ENCODE measurements at regions of chr2 and their contacts with region 1.

Region 1: GRCh38 chr2:102366406-102367112 is 11.0 kb downstream of the IL18R1 start:
- DNase-seq: peak; percentile 35
- ATAC-seq: peak; percentile 54
- H3K4me3 Mint-ChIP-seq: peak overlapping the region; percentile 55
- H3K27ac Mint-ChIP-seq: peak overlapping the region; percentile 93
- H3K4me1 Mint-ChIP-seq: peaks cover 73% of the 10 kb centered on the region
- H3K27me3 Mint-ChIP-seq: no peaks in the 10 kb centered on the region

Region 2: DNA sequence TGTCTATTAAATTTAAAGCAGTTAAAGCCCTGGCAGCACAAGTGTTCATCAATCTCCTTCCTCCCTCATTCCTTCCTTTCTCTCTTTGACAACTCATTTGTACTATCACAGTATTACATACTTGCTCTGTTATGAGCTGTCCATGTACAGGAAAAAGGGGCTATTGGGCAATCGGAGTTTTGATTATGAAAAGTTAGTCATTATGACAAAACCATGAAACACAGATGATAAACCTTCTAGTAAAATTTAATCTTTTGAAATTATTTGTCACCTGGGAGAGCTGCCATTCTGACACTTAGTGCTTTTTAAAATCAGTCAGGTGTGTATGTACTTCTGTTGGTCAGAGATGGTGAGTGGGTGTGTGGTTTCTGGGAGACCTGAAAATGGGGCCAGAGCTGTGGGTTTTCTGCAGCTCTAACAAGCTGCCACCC is 629.7 kb before region 1 on chr2:
- CTCF ChIA-PET with region 1: no interaction called
- POLR2A ChIA-PET with region 1: no interaction called
- intact Hi-C with region 1: loop called in 1 of 2 experiments (anchors 10 kb)
- DNase-seq: peak; percentile 77
- ATAC-seq: peak; percentile 86
- H3K4me3 Mint-ChIP-seq: no peak overlapping the region
- H3K27ac Mint-ChIP-seq: peak overlapping the region; percentile 51
- H3K4me1 Mint-ChIP-seq: peaks cover 84% of the 10 kb centered on the region
- H3K27me3 Mint-ChIP-seq: no peaks in the 10 kb centered on the region

Region 3: DNA sequence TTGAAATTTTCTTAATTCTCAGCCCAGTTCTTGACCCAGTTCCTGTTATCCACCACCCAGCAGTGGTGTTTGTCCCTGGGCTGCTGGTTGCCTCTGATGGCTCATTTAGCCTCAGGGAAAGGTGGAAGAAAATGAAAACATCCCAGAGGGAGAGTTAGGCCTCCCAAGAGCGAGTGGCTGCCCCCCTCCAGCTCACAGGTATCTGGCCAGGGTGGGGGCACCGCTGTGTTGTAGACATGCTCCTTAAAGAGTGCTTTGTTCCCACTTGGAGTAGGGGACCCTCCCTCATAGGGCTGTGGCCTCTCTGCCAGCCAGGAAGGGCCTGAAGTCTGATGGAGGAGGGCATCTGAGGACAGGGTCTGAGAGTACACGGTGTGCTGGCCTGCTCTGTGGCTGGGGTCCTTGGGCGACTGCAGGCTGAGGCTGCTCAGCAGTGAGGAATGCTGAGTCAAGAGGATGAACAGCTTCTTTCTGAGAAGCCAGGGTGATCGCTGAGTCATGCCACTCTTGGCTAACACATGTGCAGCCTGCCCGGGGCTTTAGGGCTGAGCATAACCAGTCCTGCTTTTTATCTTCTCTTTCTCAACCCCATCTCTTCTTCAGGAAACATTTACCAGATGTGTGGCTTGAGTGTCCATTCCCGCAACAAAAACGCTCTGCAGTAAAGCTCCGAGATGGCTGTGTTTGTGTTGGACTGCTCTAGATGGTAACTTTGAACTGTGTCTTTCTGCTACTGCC is 302.4 kb before region 1 on chr2:
- CTCF ChIA-PET with region 1: no interaction called
- POLR2A ChIA-PET with region 1: no interaction called
- intact Hi-C with region 1: loop called in 1 of 2 experiments (anchors 1 kb)
- DNase-seq: peak; percentile 77
- ATAC-seq: peak; percentile 35
- H3K4me3 Mint-ChIP-seq: no peak overlapping the region
- H3K27ac Mint-ChIP-seq: peak overlapping the region; percentile 86
- H3K4me1 Mint-ChIP-seq: peaks cover 38% of the 10 kb centered on the region
- H3K27me3 Mint-ChIP-seq: no peaks in the 10 kb centered on the region

Region 4: DNA sequence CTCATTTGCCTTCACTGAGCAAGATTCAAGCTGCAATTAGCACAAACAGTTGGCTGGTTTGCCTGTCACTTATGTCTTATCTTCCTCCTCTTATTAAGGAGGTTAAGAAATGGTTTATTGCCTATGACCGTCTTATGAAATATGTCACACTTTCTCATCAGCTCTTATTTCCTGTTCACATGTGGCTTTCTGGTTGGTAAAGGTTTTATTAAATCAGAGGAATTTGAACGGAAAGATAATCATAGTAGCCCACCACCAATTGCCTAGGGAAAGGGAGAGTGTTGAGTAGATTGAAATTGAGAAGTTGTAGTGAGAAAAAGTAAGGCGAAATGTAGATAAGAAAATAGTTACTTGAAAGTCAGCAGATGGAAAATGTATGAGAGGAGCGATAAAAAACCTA is 228.2 kb before region 1 on chr2:
- CTCF ChIA-PET with region 1: no interaction called
- POLR2A ChIA-PET with region 1: no interaction called
- intact Hi-C with region 1: loop called (anchors 2 kb)
- DNase-seq: no peak
- ATAC-seq: peak; percentile 7
- H3K4me3 Mint-ChIP-seq: peak overlapping the region; percentile 7
- H3K27ac Mint-ChIP-seq: peak overlapping the region; percentile 89
- H3K4me1 Mint-ChIP-seq: peaks cover 64% of the 10 kb centered on the region
- H3K27me3 Mint-ChIP-seq: peaks cover 23% of the 10 kb centered on the region

Region 5: GRCh38 chr2:102206666-102207341 is 159.8 kb before region 1 on chr2:
- CTCF ChIA-PET with region 1: no interaction called
- POLR2A ChIA-PET with region 1: no interaction called
- intact Hi-C with region 1: no loop called
- DNase-seq: no peak
- ATAC-seq: no peak
- H3K4me3 Mint-ChIP-seq: no peak overlapping the region
- H3K27ac Mint-ChIP-seq: no peak overlapping the region
- H3K4me1 Mint-ChIP-seq: no peaks in the 10 kb centered on the region
- H3K27me3 Mint-ChIP-seq: no peaks in the 10 kb centered on the region

Region 6: GRCh38 chr2:102355526-102356380 is 10.8 kb before region 1 on chr2 and contains the start of gene IL18R1:
- CTCF ChIA-PET with region 1: interaction called, 10 read pairs
- POLR2A ChIA-PET with region 1: interaction called, 3 read pairs
- intact Hi-C with region 1: loop called (anchors 1 kb)
- DNase-seq: peak; percentile 85
- ATAC-seq: peak; percentile 86
- H3K4me3 Mint-ChIP-seq: peak within 1 kb of the TSS; percentile 100
- H3K27ac Mint-ChIP-seq: peak within 1 kb of the TSS; percentile 99
- H3K4me1 Mint-ChIP-seq: peaks cover 36% of the 10 kb centered on the region
- H3K27me3 Mint-ChIP-seq: no peaks in the 10 kb centered on the region
- total RNA-seq, gene IL18R1: 22.4 to 23.4 TPM

Region 7: DNA sequence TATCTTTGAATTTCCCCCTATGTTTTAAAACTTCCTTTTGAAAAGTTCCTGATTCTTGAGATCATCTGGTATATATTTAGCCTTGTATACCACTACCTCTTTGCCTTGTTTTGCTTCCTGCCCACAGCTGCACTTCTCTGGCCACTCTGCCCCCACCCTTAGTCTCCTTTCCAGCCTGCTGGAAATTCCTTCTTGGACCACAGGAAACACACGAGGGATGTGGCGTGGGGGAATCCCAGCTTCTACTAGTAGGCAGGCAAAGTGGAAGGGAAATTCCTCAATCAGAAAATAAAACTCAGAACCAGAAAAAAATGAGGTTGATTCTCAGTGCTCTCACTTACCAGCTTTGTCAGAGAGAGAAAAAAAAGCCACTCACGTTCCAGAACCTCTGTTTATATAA is 69.8 kb after region 1 on chr2:
- CTCF ChIA-PET with region 1: interaction called, 5 read pairs
- POLR2A ChIA-PET with region 1: interaction called, 3 read pairs
- intact Hi-C with region 1: loop called (anchors 1 to 2 kb)
- DNase-seq: peak; percentile 38
- ATAC-seq: no peak
- H3K4me3 Mint-ChIP-seq: no peak overlapping the region
- H3K27ac Mint-ChIP-seq: peak overlapping the region; percentile 71
- H3K4me1 Mint-ChIP-seq: peaks cover 30% of the 10 kb centered on the region
- H3K27me3 Mint-ChIP-seq: no peaks in the 10 kb centered on the region